Cardiac septum (tissue), 1 donor: ENCODE measurements at regions of chr11 and their contacts with region 1.

Region 1: DNA sequence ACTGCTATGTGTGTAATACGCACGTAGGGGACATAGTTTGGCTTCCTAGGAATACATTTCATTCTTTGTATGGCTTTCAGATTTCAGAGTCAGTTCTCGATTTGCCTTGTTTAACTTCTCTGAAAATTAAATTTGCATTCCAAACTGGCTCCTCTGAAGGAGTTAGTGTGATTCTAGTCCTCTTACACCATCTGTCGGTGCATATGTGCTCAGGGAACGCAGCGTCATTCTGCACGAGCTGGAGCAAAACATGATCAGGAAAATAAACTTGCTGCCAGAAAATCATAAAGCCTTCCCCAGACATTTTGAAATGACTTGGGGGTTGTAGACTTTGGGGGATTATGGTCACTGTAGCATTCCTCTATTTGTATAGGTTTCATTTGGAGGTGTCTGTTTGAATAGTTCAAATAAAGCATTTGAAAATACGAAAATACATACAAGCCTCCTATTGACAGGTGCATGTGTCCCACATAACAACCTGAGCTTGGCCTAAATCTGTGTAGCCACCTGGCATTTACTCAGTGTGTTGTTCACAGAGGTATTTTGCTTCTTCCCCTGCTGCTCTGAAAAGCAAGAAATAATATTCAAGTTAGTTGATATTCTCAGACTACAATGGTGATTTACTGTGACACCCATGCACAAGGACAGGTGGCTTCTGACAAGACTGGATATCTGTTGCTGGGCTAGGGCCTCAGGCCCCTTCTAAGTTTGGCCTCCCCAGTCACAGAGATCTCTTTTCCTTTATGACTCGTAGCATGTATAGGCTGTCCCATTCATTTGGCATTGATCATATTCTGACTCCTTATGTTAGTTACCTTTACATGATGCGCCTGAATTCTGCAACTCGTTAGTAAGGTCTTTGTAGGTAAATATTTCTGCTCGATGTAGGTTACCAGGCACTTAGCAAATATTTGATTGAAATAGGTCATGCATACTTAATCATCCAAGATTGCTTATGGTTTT is 81.6 kb upstream of the SORL1-AS1 start:
- DNase-seq: no peak

Region 2: DNA sequence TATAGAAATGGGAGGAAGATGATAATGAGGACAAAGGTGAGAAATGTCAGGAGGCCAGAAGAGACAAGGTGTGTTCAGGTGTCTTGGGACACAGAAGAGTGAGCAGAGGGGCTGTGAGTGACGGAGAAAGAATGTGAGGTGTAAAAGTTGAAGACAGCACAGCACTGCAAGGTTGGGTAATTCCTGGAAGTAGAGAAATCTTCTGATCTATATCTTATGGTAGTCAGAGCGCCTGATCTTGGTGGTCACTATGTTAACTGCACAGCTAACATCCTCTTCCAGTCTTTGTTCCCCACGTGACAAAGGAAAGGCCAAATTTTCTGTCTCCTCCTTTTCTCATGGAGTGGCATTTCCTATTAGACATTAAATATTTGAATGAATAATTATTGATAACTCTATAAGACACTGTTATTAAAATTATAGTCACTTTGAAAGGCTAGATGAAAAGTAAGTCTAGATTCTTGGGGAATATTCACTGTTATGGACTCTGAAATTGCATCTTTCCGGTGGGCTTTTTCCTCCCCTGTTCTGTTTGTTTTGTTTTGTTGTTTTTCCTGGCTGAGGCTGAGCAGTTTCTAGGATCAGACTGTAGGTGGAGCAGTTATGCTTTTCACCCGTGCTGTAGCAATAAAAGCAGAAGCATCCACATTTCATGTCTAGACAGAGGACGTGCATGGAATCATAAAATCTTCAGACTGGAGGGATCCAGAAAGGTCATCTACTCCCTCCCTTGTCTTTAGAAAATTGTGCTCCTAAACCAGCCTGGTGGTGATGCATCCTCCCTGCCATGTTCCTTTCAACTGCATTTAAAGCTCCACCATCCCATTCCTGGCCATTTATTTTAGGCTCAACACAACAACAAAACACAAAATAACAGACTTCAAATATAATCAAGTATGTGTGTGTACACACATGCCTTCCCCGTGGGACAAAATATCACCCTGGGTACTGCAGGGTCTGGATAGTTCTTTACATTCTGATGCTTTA is 215.3 kb before region 1 on chr11:
- intact Hi-C with region 1: loop called (anchors 10 kb)
- DNase-seq: no peak